Right cardiac atrium (tissue), 5 donors: ENCODE measurements at regions of chr14 and their contacts with region 1.

Region 1: DNA sequence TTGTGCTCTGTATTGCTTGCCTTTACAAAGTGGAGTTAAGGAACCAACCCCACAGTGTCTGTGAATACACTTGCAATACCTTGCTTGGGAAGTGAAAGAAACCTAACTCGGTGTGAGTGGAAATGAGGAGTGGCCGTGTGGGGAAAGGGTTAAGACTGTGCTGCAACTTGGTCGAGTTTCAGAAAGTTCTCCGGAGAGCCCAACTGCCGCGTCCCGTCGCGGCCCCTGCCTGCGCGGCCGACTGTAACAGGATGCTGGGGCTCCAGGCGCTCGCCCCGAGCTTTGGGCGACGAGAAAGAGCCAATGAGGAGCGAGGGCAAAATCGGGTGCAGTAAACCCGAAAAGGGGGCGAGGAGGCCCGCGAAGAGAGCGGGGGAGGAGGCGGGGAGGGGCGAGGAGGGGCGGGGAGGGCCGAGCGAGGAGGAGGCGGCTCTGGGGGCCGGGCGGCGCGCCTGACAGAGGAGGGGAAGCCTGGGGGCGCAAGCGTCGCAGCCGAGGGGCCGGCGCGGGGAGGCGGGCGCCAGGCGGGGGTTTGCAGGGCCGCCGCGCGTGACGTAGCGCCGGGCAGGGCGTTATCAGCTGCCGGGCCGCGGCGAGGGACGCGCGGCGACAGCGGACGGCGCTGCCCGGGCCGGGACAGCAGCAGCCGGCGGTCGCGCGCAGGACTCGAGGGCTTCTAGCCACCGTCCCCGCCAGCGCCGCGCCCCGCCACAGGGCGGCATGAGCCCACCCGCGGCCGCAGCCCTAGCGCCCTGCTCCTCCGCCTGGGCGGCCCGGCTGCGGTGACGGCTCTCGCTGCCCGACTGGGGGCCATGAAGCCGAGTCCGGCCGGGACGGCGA is at the start of gene DACT1:
- DNase-seq: peak; percentile 83 to 95 (median 94)
- ATAC-seq: peak; percentile 87 to 88
- H3K4me3 ChIP-seq: peak within 1 kb of the TSS; percentile 67
- H3K27ac ChIP-seq: peak within 1 kb of the TSS; percentile 71
- H3K4me1 ChIP-seq: no peaks in the 10 kb centered on the region
- H3K27me3 ChIP-seq: no peaks in the 10 kb centered on the region
- total RNA-seq, gene DACT1: 8.0 to 10.3 (median 9.8) TPM

Region 2: DNA sequence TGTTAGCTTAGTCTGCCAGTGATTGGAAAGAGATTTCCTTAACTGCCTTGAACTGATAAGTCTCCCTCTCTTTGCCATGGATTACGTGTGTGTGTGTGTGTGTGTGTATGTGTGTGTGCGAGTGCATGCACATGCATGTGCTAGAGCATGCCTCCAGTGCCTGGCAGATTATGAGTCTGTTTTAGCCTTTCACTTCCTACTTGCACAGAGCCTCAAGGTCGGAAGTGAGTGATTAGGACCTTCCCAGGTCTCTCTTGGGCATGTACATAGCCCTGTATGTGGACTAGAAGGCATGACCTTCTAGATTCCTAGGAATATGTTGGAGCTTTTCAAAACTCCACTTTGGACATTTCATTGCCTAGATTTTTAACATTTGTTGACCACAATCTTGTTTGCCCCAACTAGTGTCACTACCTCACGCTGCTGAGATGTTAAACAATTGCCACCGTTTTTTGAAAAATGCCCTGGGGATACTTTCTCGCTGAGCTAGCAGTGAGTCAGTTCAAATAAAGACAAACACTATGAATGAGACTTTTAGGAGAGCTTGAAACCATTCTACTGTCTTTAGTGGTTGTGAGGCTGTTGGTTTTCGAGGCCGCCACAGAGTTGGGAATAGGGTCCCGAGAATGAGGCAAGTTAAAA is 181.9 kb before region 1 on chr14:
- intact Hi-C with region 1: no loop called
- DNase-seq: no peak
- ATAC-seq: no peak
- H3K4me3 ChIP-seq: no peak overlapping the region
- H3K27ac ChIP-seq: no peak overlapping the region
- H3K4me1 ChIP-seq: no peaks in the 10 kb centered on the region
- H3K27me3 ChIP-seq: no peaks in the 10 kb centered on the region

Region 3: GRCh38 chr14:58501214-58501816 is 136.3 kb before region 1 on chr14:
- intact Hi-C with region 1: loop called in 2 of 4 experiments (anchors 5 to 10 kb)
- DNase-seq: no peak
- ATAC-seq: peak; percentile 45 to 63
- H3K4me3 ChIP-seq: no peak overlapping the region
- H3K27ac ChIP-seq: no peak overlapping the region
- H3K4me1 ChIP-seq: no peaks in the 10 kb centered on the region
- H3K27me3 ChIP-seq: no peaks in the 10 kb centered on the region

Region 4: DNA sequence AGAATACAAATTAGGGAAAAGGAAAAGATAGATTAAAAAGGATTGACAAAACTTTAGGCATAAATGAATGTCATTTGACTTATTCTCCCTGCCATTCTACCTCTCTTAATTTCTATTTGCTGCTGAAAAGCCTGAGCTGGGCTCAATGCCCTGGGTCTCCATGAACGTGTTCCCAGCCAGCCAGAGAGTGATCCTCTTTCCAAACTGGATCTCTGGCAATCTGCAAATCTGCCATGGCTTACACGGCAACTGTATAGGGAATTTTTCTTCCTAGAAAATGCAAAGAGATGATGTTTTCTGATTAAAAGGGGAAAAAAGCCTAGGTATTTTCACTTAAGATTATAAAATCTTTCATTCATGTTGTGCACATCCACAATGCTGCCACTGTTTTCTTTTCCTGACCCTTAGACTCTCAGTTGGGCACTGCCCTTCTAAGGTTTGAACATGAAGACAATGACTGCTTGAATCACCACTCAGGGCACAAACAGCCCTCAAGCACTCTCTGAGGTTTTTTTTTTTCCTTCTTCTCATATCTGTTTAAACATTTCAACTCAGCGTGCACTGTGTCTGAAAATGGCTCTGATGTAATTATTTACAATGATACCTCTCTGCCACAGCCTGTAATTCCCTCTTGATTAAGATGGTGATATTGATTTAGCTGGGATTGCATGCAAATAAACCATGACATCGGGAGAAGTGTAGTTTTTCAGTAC is 60.5 kb after region 1 on chr14:
- intact Hi-C with region 1: no loop called
- DNase-seq: no peak
- ATAC-seq: no peak
- H3K4me3 ChIP-seq: no peak overlapping the region
- H3K27ac ChIP-seq: no peak overlapping the region
- H3K4me1 ChIP-seq: peaks cover 3% of the 10 kb centered on the region
- H3K27me3 ChIP-seq: no peaks in the 10 kb centered on the region

Region 5: GRCh38 chr14:59004012-59004411 is 366.4 kb after region 1 on chr14:
- intact Hi-C with region 1: loop called in 1 of 4 experiments (anchors 10 kb)
- DNase-seq: no peak
- ATAC-seq: no peak
- H3K4me3 ChIP-seq: no peak overlapping the region
- H3K27ac ChIP-seq: no peak overlapping the region
- H3K4me1 ChIP-seq: peaks cover 2% of the 10 kb centered on the region
- H3K27me3 ChIP-seq: no peaks in the 10 kb centered on the region

Region 6: GRCh38 chr14:59028476-59029202 is 391.0 kb after region 1 on chr14:
- intact Hi-C with region 1: loop called in 3 of 4 experiments (anchors 10 kb)
- DNase-seq: peak; percentile 66 to 82 (median 73)
- ATAC-seq: peak; percentile 83 to 85
- H3K4me3 ChIP-seq: no peak overlapping the region
- H3K27ac ChIP-seq: no peak overlapping the region
- H3K4me1 ChIP-seq: no peaks in the 10 kb centered on the region
- H3K27me3 ChIP-seq: no peaks in the 10 kb centered on the region

Region 7: DNA sequence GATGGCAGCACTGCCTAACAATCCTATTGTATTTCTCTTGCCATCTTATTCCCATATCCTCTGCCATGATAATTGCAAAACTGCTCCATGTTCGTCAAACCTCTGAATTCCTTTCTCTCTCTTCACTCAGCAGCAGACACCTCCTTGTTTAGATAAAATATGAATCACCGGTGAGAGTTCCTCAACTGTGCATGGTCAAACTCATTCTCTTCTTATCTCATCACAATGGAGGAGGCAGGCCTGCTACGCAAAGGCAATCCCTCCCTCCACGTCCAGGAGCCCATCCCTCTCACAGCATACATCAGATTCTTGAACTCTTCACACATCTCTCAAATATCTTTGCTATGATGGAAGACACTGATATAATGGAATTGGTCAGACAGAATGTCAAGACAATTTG is 460.8 kb after region 1 on chr14:
- intact Hi-C with region 1: no loop called
- DNase-seq: no peak
- ATAC-seq: no peak
- H3K4me3 ChIP-seq: no peak overlapping the region
- H3K27ac ChIP-seq: no peak overlapping the region
- H3K4me1 ChIP-seq: no peaks in the 10 kb centered on the region
- H3K27me3 ChIP-seq: no peaks in the 10 kb centered on the region